ENCODE measurements at regions of chr3 and their contacts with region 1.

Region 1: DNA sequence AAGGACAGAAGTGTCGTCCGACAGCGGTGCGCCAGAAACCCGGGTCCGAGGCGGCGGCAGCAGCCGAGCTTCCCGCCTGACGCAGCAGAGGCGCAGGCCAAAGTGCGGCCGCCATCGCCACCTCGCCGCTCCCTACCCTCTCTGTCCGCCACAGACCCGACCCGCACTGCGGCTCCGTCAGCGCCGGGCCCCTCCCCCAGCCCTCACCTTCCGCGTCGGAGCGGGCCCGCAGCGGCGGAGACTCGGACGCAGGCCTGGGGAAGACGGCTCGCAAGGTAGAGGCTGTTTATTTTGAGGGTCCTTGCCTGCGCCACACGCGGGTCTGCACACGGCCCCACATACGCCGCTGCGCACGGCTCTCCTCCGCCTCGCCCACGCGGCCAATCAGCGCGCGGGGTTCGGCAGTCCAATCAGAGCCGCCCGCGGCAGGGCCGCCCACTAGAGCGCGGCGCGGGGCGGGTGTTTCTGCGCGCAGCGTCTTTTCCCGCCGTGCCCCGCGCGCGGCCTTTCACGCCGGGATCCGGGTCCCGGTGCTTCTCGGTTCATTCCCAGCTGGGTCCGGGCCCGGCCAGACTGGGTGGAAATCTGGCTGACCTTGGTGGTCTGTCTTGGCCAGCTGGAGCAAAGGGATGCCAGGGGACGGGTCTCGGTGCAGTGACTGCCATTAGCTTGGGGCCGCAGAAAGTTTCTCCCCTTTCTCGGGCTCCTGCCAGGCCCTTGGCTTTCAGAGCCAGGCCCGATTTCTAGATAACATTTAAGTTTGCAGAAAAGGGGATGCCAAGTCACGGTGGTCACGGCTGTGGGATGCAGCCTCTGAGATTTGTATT is at the start of gene CNBP:
- DNase-seq: peak; percentile 95
- H3K4me3 Mint-ChIP-seq: peak within 1 kb of the TSS; percentile 97
- H3K27ac Mint-ChIP-seq: peak within 1 kb of the TSS; percentile 96
- H3K4me1 Mint-ChIP-seq: peaks cover 27% of the 10 kb centered on the region
- H3K27me3 Mint-ChIP-seq: no peaks in the 10 kb centered on the region
- total RNA-seq, gene CNBP: 342 to 348 TPM

Region 2: DNA sequence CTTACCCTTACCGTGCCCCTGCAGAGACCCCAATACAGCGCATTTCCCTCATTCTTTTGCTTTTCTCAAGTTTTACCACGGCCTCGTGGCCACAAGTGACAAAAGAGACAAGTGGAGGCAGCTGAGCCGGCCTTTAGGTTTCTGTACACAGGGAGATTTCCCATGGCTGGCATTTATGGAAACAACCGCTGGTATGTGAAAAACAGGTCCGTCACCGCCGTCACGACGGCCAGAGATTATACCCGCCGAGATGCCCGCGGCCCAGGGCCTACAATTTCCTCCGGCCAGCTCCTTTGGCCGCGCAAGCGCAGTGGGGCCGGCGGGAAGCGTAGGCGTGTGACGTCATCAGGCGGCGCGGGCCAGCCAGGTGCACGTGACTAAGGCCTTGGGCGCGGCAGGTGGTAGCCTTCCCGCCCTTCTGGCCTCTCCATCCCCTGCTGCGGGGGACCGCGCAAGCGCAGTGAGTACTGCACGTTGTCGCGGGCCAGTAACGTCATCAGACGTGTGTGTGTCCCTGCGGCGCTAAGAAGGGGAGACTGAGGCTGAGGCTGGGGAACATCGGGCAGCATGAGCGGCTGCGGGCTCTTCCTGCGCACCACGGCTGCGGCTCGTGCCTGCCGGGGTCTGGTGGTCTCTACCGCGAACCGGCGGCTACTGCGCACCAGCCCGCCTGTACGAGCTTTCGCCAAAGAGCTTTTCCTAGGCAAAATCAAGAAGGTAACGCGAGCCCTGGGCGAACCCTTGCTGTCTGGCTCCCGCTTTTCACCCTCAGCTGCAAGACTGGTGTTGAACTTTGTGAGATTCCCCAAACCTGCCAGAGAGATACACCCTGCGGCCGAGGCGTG is 304.4 kb before region 1 on chr3 and contains the start of gene ACAD9:
- CTCF ChIA-PET with region 1: no interaction called
- POLR2A ChIA-PET with region 1: no interaction called
- intact Hi-C with region 1: loop called (anchors 5 kb)
- DNase-seq: peak; percentile 98
- H3K4me3 Mint-ChIP-seq: peak within 1 kb of the TSS; percentile 93
- H3K27ac Mint-ChIP-seq: peak within 1 kb of the TSS; percentile 95
- H3K4me1 Mint-ChIP-seq: peaks cover 61% of the 10 kb centered on the region
- H3K27me3 Mint-ChIP-seq: no peaks in the 10 kb centered on the region
- total RNA-seq, gene ACAD9: 45.3 to 45.5 TPM

Region 3: GRCh38 chr3:129160891-129161859 is 22.6 kb before region 1 on chr3 and contains the start of gene ISY1:
- CTCF ChIA-PET with region 1: interaction called, 30 read pairs
- POLR2A ChIA-PET with region 1: interaction called, 25 read pairs
- intact Hi-C with region 1: loop called (anchors 1 kb)
- DNase-seq: peak; percentile 93
- H3K4me3 Mint-ChIP-seq: peak within 1 kb of the TSS; percentile 98
- H3K27ac Mint-ChIP-seq: peak within 1 kb of the TSS; percentile 100
- H3K4me1 Mint-ChIP-seq: peaks cover 31% of the 10 kb centered on the region
- H3K27me3 Mint-ChIP-seq: no peaks in the 10 kb centered on the region
- total RNA-seq, gene ISY1: 60.7 to 61.7 TPM

Region 4: GRCh38 chr3:129238945-129239706 is 55.3 kb after region 1 on chr3:
- CTCF ChIA-PET with region 1: interaction called, 3 read pairs
- POLR2A ChIA-PET with region 1: interaction called, 5 read pairs
- intact Hi-C with region 1: loop called (anchors 2 kb)
- DNase-seq: peak; percentile 64
- H3K4me3 Mint-ChIP-seq: peak overlapping the region; percentile 15
- H3K27ac Mint-ChIP-seq: peak overlapping the region; percentile 81
- H3K4me1 Mint-ChIP-seq: peaks cover 20% of the 10 kb centered on the region
- H3K27me3 Mint-ChIP-seq: no peaks in the 10 kb centered on the region

Region 5: DNA sequence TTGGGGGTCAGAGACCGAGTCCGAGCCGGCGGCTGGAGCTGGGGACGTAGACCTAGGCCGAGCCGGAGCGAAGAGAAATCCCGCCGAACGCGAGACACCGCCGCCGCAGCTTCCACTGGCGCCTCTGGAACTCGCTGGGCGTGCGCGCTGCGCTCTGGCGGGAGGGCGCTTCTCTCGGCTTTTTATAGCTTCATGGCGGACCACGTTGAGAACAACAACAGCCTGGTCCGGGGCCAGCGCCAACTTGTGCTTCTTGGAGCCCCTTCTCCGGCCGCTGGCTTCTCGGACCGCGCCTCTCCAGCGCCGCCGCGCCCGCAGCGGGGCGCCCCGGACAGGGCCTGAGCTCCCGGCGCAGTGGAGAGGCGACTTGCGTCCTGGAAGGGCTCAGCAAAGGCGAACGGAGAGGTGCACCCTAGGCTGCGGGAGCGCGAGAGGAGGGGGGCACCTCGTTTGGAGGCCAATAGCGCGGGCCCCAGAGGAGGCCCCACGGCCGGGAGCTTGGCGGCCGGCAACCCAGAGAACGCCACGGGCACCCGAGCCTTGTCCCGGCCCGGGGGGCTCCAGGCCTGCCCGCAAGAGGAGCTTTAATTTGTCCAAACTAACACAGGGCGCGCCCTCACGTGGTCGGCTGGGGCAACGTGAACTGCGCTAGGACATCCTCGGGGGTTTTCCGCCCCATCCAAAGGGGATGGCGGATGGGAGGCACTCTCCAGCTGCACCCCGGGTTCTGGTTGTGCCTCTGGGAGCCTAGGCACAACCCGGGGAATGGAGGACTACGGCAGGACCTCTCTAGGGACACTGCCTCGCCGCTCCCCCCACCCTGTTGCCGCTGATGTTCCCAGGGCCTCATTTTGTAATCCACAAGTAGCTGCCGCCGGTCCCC is 132.6 kb after region 1 on chr3:
- CTCF ChIA-PET with region 1: interaction called, 4 read pairs
- POLR2A ChIA-PET with region 1: interaction called, 11 read pairs
- intact Hi-C with region 1: no loop called
- DNase-seq: peak; percentile 90
- H3K4me3 Mint-ChIP-seq: peak overlapping the region; percentile 93
- H3K27ac Mint-ChIP-seq: peak overlapping the region; percentile 89
- H3K4me1 Mint-ChIP-seq: peaks cover 26% of the 10 kb centered on the region
- H3K27me3 Mint-ChIP-seq: no peaks in the 10 kb centered on the region

Measured in activated CD4-positive, alpha-beta memory T cell treated with anti-CD3 and anti-CD28 coated beads for 36 hours (primary cell).